ENCODE measurements at regions of chr11 and their contacts with region 1.

Region 1: DNA sequence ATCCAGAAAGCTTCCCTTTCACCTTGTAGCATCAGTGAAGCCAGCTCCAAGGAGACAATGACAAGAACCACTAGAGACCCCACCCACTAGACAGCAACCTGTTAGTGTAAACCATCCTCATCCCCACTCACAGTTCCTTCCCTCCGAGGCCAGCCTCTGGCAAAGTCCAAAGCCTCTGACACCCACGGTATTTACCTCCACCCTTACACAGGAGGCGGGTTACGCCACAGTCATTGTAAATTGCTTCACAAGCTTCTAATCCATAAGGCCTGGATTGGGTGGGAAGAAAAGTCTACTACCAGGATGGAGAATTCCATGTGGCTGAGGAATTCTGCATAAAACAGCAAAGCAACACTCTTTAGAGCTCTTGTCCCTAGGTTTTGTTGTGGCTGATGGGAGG is 287.4 kb downstream of the BUD13 start:
- DNase-seq: no peak
- ATAC-seq: no peak
- H3K4me3 ChIP-seq: no peak overlapping the region
- H3K27ac ChIP-seq: no peak overlapping the region
- H3K4me1 ChIP-seq: no peaks in the 10 kb centered on the region
- H3K27me3 ChIP-seq: peaks cover 0 to 63% (median 0%) of the 10 kb centered on the region in 9 donors
- CTCF ChIP-seq: no peak
- POLR2A ChIP-seq: no peak

Region 2: DNA sequence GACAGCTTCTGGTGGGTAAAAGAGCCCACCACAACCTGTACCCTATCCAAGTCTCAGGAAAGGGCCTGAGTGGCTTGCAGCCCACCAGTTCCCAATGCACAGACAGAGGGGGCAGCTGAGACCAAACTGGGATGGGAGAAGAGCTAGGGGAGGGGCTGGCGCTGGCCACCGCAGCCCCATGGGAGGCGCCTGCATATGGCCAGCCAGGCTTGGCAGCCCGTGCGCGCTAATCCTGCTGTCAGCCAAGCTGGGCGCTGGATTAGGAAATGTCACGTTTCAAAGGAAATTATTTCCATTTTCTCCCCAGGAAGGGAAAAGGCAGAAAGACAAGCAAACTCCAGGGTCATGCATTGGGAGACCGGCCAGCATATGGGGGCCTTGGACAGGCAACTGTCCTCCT is 50.6 kb after region 1 on chr11:
- intact Hi-C with region 1: no loop called
- DNase-seq: no peak
- ATAC-seq: no peak
- H3K4me3 ChIP-seq: no peak overlapping the region
- H3K27ac ChIP-seq: no peak overlapping the region
- H3K4me1 ChIP-seq: no peaks in the 10 kb centered on the region
- H3K27me3 ChIP-seq: peaks cover 0 to 62% (median 5%) of the 10 kb centered on the region in 9 donors
- CTCF ChIP-seq: no peak
- POLR2A ChIP-seq: no peak

Region 3: DNA sequence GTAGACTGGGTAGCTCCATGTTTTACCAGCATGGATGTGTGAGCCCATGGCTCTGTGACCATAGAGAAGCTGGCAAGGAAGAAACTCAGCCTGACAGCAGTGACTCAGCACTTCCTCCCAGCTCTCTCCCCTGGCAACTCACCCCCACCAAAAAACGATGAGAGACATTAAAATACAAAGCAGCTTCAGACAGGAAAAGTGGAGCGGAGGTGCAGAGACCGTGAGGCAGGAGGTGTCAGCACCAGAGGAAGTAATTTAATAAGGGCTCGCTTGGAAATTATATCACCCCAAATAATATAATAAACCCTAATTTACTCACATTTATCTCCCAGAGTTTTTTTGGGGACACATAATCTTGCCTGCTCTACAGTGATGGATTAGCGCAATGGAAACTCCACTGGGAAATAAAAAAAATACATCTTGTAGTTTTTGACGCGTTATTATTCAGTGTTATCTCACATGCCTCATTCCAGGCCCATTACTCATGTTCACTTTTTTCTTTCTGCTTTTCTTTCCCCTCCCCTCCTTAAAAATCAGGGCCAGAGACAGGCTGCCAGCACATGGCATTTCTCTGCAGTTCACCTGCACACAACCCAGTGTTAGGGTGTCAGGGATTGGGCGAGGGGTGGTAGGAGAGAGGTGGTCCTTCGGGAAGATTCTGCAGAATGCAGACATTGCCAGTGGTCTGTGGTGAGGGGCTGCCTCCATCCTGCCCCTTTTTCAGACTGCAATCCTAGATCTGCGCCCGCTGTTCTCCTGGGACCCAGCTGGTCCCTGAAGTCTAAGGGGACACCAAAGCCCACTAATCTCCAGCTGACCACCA is 116.6 kb after region 1 on chr11:
- intact Hi-C with region 1: loop called in 1 of 10 experiments (anchors 5 kb)
- DNase-seq: no peak
- ATAC-seq: no peak
- H3K4me3 ChIP-seq: no peak overlapping the region
- H3K27ac ChIP-seq: no peak overlapping the region
- H3K4me1 ChIP-seq: no peaks in the 10 kb centered on the region
- H3K27me3 ChIP-seq: peaks cover 0 to 27% (median 0%) of the 10 kb centered on the region in 9 donors
- CTCF ChIP-seq: no peak
- POLR2A ChIP-seq: no peak

Region 4: DNA sequence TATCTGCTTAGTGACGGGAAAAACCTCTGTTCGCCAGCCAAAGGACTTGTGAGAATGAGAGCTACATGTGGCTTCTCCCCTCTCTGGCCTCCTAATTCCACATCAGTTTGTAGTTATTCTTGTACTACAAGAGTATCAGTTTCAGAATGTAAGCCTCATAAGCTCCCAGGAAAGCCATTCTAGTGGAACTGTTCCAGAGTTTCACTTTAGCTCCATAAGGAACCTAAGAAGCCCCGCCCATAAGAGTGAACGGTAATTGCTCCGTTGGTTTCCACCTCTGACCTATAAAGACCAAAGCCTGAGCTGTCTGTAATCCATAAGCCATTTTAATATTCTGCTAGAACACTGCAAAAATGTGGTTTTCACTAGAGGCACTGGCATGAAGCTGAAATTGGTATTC is 559.8 kb after region 1 on chr11:
- intact Hi-C with region 1: no loop called
- DNase-seq: no peak
- ATAC-seq: peak in 3 of 4 donors; percentile 44 to 58 (median 58)
- H3K4me3 ChIP-seq: no peak overlapping the region
- H3K27ac ChIP-seq: peak overlapping the region in 7 of 12 donors; percentile 4 to 48 (median 36)
- H3K4me1 ChIP-seq: peaks cover 3 to 52% (median 30%) of the 10 kb centered on the region in 12 donors
- H3K27me3 ChIP-seq: no peaks in the 10 kb centered on the region
- CTCF ChIP-seq: no peak
- POLR2A ChIP-seq: no peak